ENCODE measurements at regions of chr10 and their contacts with region 1.

Region 1: DNA sequence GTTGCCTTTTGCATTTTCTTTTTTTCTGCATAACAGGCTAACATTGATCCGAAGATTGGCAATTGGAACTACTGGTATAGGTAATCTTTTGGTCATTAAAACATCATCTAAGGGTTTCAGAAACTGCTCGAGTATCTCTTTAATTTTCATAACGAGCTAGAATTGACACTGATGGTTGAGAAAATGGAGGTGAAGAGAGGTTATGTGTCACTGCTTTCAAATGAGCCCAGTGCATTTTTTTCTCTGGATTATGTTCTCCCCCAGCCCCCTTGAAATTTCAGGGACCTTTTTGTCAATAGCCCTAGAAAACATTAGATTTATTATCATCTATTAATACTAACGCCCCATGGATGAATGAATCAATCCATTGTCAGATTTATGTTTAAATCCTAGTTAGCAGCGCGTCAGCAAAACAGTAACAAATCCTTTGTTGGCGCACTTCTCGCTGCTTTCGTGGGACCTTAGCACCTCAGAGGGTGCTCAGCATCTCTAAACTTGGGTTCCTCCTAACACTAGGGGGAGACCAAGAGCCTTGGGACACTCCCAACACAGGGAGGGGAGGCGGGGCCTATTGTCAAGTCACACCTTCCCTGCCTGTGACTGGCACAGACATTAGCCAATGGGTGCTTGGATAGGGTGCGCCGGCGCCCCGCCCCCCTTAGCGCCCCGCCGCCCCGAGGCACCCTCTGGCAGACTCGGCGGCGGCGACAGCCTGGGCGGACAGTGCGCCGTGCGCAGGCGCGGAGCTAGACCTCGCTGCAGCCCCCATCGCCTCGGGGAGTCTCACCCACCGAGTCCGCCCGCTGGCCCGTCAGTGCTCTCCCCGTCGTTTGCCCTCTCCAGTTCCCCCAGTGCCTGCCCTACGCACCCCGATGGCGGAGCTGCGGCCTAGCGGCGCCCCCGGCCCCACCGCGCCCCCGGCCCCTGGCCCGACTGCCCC is at the start of gene SUFU:
- DNase-seq: peak; percentile 99
- ATAC-seq: peak; percentile 72
- H3K4me3 ChIP-seq: peak within 1 kb of the TSS; percentile 86 to 99 (median 92)
- H3K4me3 Mint-ChIP-seq: no peak within 1 kb of the TSS
- H3K27ac ChIP-seq: peak within 1 kb of the TSS; percentile 71 to 78
- H3K27ac Mint-ChIP-seq: peak within 1 kb of the TSS; percentile 86
- H3K4me1 ChIP-seq: peaks cover 24 to 28% of the 10 kb centered on the region in 2 donors
- H3K4me1 Mint-ChIP-seq: peaks cover 25% of the 10 kb centered on the region
- H3K27me3 ChIP-seq: no peaks in the 10 kb centered on the region
- H3K27me3 Mint-ChIP-seq: no peaks in the 10 kb centered on the region
- CTCF ChIP-seq: peak; percentile 93
- total RNA-seq, gene SUFU: 13.3 and 16.7 TPM in 2 replicates

Region 2: DNA sequence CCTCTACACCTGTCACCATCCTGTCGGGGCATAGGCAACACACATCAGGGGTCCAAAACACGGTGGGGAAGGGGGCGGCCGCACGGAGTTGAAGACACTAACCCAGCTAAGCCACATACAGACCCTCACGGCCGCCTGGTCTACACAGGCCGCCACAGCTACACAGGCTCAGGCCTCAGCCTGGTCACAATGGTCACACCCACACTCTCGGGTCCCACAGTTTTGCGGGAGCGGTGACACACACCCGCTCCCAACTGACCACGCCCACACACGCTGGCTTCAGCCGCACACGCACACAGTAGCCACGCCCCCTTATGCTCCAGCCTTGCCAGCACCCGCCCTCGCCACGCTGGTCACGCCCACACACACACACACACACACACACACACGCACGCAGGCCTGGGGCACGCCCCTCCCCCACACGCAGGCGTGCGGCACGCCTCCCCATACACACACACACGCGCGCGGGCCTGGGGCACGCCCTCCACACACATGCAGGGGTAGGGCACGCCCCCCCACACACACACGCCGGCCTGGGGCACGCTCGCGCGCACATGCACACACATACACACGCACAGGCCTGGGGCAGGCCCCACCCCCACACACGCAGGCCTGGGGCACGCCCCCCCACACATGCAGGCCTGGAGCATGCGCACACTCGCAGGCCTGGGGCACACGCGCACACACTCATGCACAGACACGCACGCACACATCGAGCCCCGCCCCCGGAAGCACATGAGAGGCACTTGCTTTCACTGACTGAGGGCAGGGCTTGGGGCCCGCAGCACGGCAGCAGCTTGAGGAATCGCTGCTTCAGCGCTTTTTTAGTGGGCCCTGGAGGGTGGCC is 673.0 kb before region 1 on chr10:
- CTCF ChIA-PET with region 1: no interaction called
- POLR2A ChIA-PET with region 1: no interaction called
- intact Hi-C with region 1: loop called (anchors 5 kb)
- DNase-seq: peak; percentile 99
- ATAC-seq: peak; percentile 73
- H3K4me3 ChIP-seq: peak overlapping the region; percentile 3 to 72 (median 58)
- H3K4me3 Mint-ChIP-seq: peak overlapping the region; percentile 94
- H3K27ac ChIP-seq: peak overlapping the region; percentile 89 to 96
- H3K27ac Mint-ChIP-seq: peak overlapping the region; percentile 99
- H3K4me1 ChIP-seq: peaks cover 35 to 58% of the 10 kb centered on the region in 2 donors
- H3K4me1 Mint-ChIP-seq: peaks cover 45% of the 10 kb centered on the region
- H3K27me3 ChIP-seq: no peaks in the 10 kb centered on the region
- H3K27me3 Mint-ChIP-seq: no peaks in the 10 kb centered on the region
- CTCF ChIP-seq: no peak

Region 3: DNA sequence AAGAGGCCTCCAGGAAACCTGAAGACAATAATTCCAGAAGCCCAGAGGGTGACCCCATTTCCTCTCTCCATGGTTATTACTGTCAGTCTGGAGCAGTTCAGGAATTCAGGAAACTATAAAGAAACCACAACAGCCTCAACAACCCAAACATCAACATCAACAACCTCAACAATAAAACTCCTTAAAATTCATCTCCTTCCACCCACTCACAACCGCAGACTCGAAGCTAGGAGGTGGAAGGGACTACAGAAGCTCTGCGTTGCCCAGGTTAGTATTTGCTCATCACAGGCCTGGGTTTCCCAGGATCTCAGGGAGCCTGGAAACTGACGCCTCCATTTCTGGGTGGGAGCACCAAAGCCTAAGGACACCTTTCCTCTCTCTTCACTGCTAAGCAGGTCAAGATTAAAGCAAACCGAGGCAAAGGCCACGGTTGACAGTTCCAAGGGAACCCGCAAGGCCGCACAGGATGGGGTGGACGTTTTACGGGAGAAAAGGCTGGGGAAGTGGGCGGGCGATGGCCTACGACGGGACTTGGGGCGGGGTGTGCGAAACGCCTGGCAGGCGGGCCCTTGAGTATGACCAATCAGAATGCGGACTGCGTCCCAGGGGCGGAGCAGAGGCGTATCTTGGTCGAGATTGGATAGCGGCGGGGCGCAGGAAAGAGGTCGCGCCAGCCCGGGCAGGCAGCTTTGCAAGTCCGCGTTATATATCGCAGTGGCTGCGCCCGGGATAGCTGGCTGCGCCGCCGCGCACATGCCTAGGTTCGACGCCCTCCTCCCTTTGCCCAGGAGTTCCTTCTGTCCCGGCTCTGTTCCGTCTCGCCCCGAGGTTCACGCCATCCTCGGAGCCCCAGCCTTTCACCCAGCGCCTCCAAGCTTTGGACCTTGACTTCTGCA is 277.7 kb before region 1 on chr10 and contains the start of gene ELOVL3:
- CTCF ChIA-PET with region 1: interaction called, 7 read pairs
- POLR2A ChIA-PET with region 1: no interaction called
- intact Hi-C with region 1: loop called (anchors 5 kb)
- DNase-seq: peak; percentile 85
- ATAC-seq: peak; percentile 89
- H3K4me3 ChIP-seq: peak within 1 kb of the TSS in 4 of 5 experiments; percentile 16 to 53 (median 36)
- H3K4me3 Mint-ChIP-seq: peak within 1 kb of the TSS; percentile 84
- H3K27ac ChIP-seq: no peak within 1 kb of the TSS
- H3K27ac Mint-ChIP-seq: no peak within 1 kb of the TSS
- H3K4me1 ChIP-seq: peaks cover 21 to 26% of the 10 kb centered on the region in 2 donors
- H3K4me1 Mint-ChIP-seq: peaks cover 25% of the 10 kb centered on the region
- H3K27me3 ChIP-seq: peaks cover 0 to 53% (median 36%) of the 10 kb centered on the region in 4 experiments
- H3K27me3 Mint-ChIP-seq: peaks cover 67% of the 10 kb centered on the region
- CTCF ChIP-seq: no peak
- total RNA-seq, gene ELOVL3: not detected in 2 replicates

Region 4: GRCh38 chr10:102399217-102400089 is 104.1 kb before region 1 on chr10:
- CTCF ChIA-PET with region 1: interaction called, 3 read pairs
- POLR2A ChIA-PET with region 1: interaction called, 8 read pairs
- intact Hi-C with region 1: loop called (anchors 1 kb)
- DNase-seq: peak; percentile 94
- ATAC-seq: peak; percentile 39
- H3K4me3 ChIP-seq: peak overlapping the region in 4 of 5 experiments; percentile 29 to 53 (median 49)
- H3K4me3 Mint-ChIP-seq: peak overlapping the region; percentile 95
- H3K27ac ChIP-seq: peak overlapping the region; percentile 74 to 80
- H3K27ac Mint-ChIP-seq: peak overlapping the region; percentile 92
- H3K4me1 ChIP-seq: peaks cover 36 to 46% of the 10 kb centered on the region in 2 donors
- H3K4me1 Mint-ChIP-seq: peaks cover 46% of the 10 kb centered on the region
- H3K27me3 ChIP-seq: no peaks in the 10 kb centered on the region
- H3K27me3 Mint-ChIP-seq: no peaks in the 10 kb centered on the region
- CTCF ChIP-seq: peak; percentile 94

Region 5: GRCh38 chr10:102450194-102450938 is 53.2 kb before region 1 on chr10:
- CTCF ChIA-PET with region 1: no interaction called
- POLR2A ChIA-PET with region 1: interaction called, 5 read pairs
- intact Hi-C with region 1: loop called (anchors 1 kb)
- DNase-seq: peak; percentile 96
- ATAC-seq: peak; percentile 79
- H3K4me3 ChIP-seq: peak overlapping the region; percentile 75 to 97 (median 87)
- H3K4me3 Mint-ChIP-seq: peak overlapping the region; percentile 97
- H3K27ac ChIP-seq: peak overlapping the region; percentile 81 to 86
- H3K27ac Mint-ChIP-seq: peak overlapping the region; percentile 97
- H3K4me1 ChIP-seq: peaks cover 12 to 15% of the 10 kb centered on the region in 2 donors
- H3K4me1 Mint-ChIP-seq: peaks cover 19% of the 10 kb centered on the region
- H3K27me3 ChIP-seq: no peaks in the 10 kb centered on the region
- H3K27me3 Mint-ChIP-seq: no peaks in the 10 kb centered on the region
- CTCF ChIP-seq: no peak

Region 6: GRCh38 chr10:102583435-102584417 is 80.2 kb after region 1 on chr10:
- CTCF ChIA-PET with region 1: interaction called, 110 read pairs
- POLR2A ChIA-PET with region 1: interaction called, 3 read pairs
- intact Hi-C with region 1: loop called (anchors 1 kb)
- DNase-seq: peak; percentile 85
- ATAC-seq: peak; percentile 96
- H3K4me3 ChIP-seq: no peak overlapping the region
- H3K4me3 Mint-ChIP-seq: no peak overlapping the region
- H3K27ac ChIP-seq: no peak overlapping the region
- H3K27ac Mint-ChIP-seq: no peak overlapping the region
- H3K4me1 ChIP-seq: no peaks in the 10 kb centered on the region
- H3K4me1 Mint-ChIP-seq: peaks cover 2% of the 10 kb centered on the region
- H3K27me3 ChIP-seq: no peaks in the 10 kb centered on the region
- H3K27me3 Mint-ChIP-seq: no peaks in the 10 kb centered on the region
- CTCF ChIP-seq: peak; percentile 90

Region 7: GRCh38 chr10:102743588-102744373 is 240.2 kb after region 1 on chr10 and contains the start of gene WBP1L:
- CTCF ChIA-PET with region 1: no interaction called
- POLR2A ChIA-PET with region 1: no interaction called
- intact Hi-C with region 1: loop called (anchors 2 kb)
- DNase-seq: peak; percentile 98
- ATAC-seq: peak; percentile 95
- H3K4me3 ChIP-seq: peak within 1 kb of the TSS; percentile 70 to 96 (median 89)
- H3K4me3 Mint-ChIP-seq: peak within 1 kb of the TSS; percentile 89
- H3K27ac ChIP-seq: peak within 1 kb of the TSS; percentile 58 to 86
- H3K27ac Mint-ChIP-seq: peak within 1 kb of the TSS; percentile 88
- H3K4me1 ChIP-seq: peaks cover 24 to 25% of the 10 kb centered on the region in 2 donors
- H3K4me1 Mint-ChIP-seq: peaks cover 42% of the 10 kb centered on the region
- H3K27me3 ChIP-seq: peaks cover 0 to 2% (median 0%) of the 10 kb centered on the region in 4 experiments
- H3K27me3 Mint-ChIP-seq: no peaks in the 10 kb centered on the region
- CTCF ChIP-seq: peak; percentile 16
- total RNA-seq, gene WBP1L: 43.2 and 44.3 TPM in 2 replicates

Region 8: GRCh38 chr10:102914781-102915180 is 411.2 kb after region 1 on chr10:
- CTCF ChIA-PET with region 1: no interaction called
- POLR2A ChIA-PET with region 1: no interaction called
- intact Hi-C with region 1: no loop called
- DNase-seq: no peak
- ATAC-seq: no peak
- H3K4me3 ChIP-seq: no peak overlapping the region
- H3K4me3 Mint-ChIP-seq: no peak overlapping the region
- H3K27ac ChIP-seq: no peak overlapping the region
- H3K27ac Mint-ChIP-seq: no peak overlapping the region
- H3K4me1 ChIP-seq: peaks cover 14 to 19% of the 10 kb centered on the region in 2 donors
- H3K4me1 Mint-ChIP-seq: peaks cover 23% of the 10 kb centered on the region
- H3K27me3 ChIP-seq: peaks cover 0 to 12% (median 6%) of the 10 kb centered on the region in 4 experiments
- H3K27me3 Mint-ChIP-seq: peaks cover 18% of the 10 kb centered on the region
- CTCF ChIP-seq: no peak